Activated CD4-positive, alpha-beta T cell treated with anti-CD3 and anti-CD28 coated beads for 36 hours (primary cell): ENCODE measurements at regions of chr7 and their contacts with region 1.

Region 1: GRCh38 chr7:138542183-138542582 is 82.1 kb downstream of the TRIM24 start:
- DNase-seq: peak; percentile 14
- ATAC-seq: peak; percentile 83
- H3K4me3 Mint-ChIP-seq: no peak overlapping the region
- H3K27ac Mint-ChIP-seq: peak overlapping the region; percentile 17
- H3K4me1 Mint-ChIP-seq: peaks cover 9% of the 10 kb centered on the region
- H3K27me3 Mint-ChIP-seq: no peaks in the 10 kb centered on the region

Region 2: DNA sequence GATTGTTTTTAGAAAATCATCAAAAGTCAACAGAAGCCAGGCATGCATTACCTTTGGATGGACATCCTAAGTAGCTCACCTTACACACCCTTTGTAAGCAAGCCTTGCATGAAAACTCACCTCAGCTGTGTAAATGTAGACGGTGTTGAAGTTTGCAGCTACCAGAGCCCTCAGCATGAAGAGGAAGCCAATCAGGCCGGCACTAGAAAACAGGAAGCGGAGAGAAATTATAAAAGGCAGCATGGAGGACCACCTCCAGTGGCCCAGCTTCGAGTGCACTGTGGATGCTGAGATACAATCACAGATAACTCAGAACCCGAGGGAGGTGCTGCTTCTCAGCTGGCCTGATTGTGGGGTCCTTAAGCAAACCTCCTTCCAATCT is 83.7 kb after region 1 on chr7:
- CTCF ChIA-PET with region 1: no interaction called
- POLR2A ChIA-PET with region 1: interaction called, 11 read pairs
- intact Hi-C with region 1: no loop called
- DNase-seq: peak; percentile 10
- ATAC-seq: peak; percentile 44
- H3K4me3 Mint-ChIP-seq: no peak overlapping the region
- H3K27ac Mint-ChIP-seq: peak overlapping the region; percentile 40
- H3K4me1 Mint-ChIP-seq: peaks cover 42% of the 10 kb centered on the region
- H3K27me3 Mint-ChIP-seq: no peaks in the 10 kb centered on the region